ENCODE measurements at regions of chr4 and their contacts with region 1.

Region 1: DNA sequence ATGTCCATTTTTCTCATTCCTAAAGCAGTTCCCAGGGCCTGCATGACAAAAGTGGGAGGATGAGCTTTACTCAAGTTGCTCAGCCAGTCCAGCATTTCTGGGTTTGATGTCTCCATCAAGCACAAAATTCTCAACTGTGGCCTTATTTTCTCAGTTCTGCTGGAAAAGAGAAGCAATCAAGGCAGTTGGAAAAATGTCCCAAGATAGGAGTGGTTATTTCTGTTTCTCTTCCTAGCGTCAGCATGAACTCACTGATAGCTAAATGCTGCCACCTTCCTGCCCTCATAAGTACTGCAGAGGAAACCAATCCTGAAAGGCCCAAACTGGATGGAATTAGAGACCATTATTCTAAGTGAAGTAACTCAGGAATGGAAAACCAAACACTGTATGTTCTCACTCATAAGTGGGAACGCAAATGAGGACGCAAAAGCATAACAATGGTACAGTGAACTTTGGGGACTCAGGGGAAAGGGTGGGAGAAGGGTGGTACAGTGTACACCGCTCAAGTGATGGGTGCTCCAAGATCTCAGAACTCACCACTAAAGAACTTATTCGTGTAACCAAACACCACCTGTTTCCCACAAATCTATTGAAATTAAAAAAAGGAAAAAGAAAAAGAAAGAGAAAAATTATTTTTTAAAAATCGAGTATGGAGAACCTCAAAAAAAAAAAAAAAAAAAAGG is 29.6 kb downstream of the ADH7 start:
- DNase-seq: peak; percentile 71
- H3K4me3 Mint-ChIP-seq: no peak overlapping the region
- H3K27ac Mint-ChIP-seq: peak overlapping the region; percentile 94
- H3K4me1 Mint-ChIP-seq: peaks cover 31% of the 10 kb centered on the region
- H3K27me3 Mint-ChIP-seq: no peaks in the 10 kb centered on the region
- CTCF ChIP-seq: peak; percentile 67

Region 2: GRCh38 chr4:99117876-99118693 is 287.5 kb before region 1 on chr4:
- CTCF ChIA-PET with region 1: no interaction called
- intact Hi-C with region 1: loop called (anchors 1 kb)
- DNase-seq: no peak
- H3K4me3 Mint-ChIP-seq: no peak overlapping the region
- H3K27ac Mint-ChIP-seq: no peak overlapping the region
- H3K4me1 Mint-ChIP-seq: no peaks in the 10 kb centered on the region
- H3K27me3 Mint-ChIP-seq: no peaks in the 10 kb centered on the region
- CTCF ChIP-seq: no peak

Region 3: GRCh38 chr4:99159699-99160098 is 245.9 kb before region 1 on chr4:
- CTCF ChIA-PET with region 1: no interaction called
- intact Hi-C with region 1: loop called (anchors 1 kb)
- DNase-seq: no peak
- H3K4me3 Mint-ChIP-seq: no peak overlapping the region
- H3K27ac Mint-ChIP-seq: no peak overlapping the region
- H3K4me1 Mint-ChIP-seq: peaks cover 18% of the 10 kb centered on the region
- H3K27me3 Mint-ChIP-seq: no peaks in the 10 kb centered on the region
- CTCF ChIP-seq: no peak

Region 4: GRCh38 chr4:99201690-99202089 is 203.9 kb before region 1 on chr4:
- CTCF ChIA-PET with region 1: interaction called, 11 read pairs
- intact Hi-C with region 1: loop called (anchors 1 kb)
- DNase-seq: no peak
- H3K4me3 Mint-ChIP-seq: no peak overlapping the region
- H3K27ac Mint-ChIP-seq: no peak overlapping the region
- H3K4me1 Mint-ChIP-seq: peaks cover 21% of the 10 kb centered on the region
- H3K27me3 Mint-ChIP-seq: no peaks in the 10 kb centered on the region
- CTCF ChIP-seq: no peak

Region 5: DNA sequence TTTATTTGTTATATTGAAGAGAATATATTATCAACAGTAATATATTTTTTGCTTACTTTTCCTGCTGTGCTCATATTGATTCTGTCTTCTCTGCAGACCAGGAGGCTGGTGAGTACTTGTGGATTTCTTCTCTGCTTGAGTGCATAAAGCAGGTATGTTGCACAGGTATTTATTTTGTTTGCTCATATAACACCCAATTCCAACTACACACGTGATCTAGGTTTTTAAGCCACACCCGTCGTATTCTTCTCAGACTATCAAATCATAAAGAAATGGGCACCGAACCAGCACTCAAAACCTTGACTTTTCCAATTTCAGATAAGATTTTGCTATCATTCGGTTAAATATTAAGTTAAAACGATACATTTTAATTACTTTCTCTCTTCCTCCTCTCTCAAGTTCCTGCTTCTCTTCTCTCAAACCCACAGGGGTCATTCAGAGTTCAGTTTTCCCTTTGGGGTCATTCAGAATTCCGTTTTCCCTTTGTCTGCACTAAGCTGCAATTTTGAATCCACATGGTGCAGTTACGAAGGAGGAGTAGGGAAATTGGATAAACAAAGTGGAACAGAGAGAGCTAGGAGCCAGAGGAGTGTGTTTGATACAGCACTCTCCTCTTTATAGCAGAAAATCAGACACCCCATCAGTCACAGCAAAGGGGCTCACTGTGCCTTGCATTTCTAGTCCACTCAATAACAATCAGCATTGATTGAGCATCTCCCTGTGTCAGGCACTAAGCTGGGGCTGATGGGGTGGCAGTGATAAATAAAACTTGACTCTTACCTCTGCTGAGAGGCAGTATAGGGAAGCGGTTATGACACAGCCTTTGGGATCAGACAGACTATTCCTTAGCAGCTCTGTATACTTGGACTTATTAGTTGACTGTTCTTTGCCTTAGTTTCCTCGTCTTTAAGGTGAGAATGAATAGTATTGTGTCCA is 52.7 kb before region 1 on chr4 and contains the start of gene ADH1C:
- CTCF ChIA-PET with region 1: no interaction called
- intact Hi-C with region 1: loop called (anchors 2 kb)
- DNase-seq: peak; percentile 6
- H3K4me3 Mint-ChIP-seq: peak within 1 kb of the TSS; percentile 61
- H3K27ac Mint-ChIP-seq: peak within 1 kb of the TSS; percentile 82
- H3K4me1 Mint-ChIP-seq: peaks cover 17% of the 10 kb centered on the region
- H3K27me3 Mint-ChIP-seq: no peaks in the 10 kb centered on the region
- CTCF ChIP-seq: no peak
- total RNA-seq, gene ADH1C: 5.8 and 7.9 TPM in 2 replicates

Region 6: GRCh38 chr4:99462875-99463464 is 57.4 kb after region 1 on chr4:
- CTCF ChIA-PET with region 1: interaction called, 15 read pairs
- intact Hi-C with region 1: loop called (anchors 1 kb)
- DNase-seq: peak; percentile 64
- H3K4me3 Mint-ChIP-seq: no peak overlapping the region
- H3K27ac Mint-ChIP-seq: no peak overlapping the region
- H3K4me1 Mint-ChIP-seq: peaks cover 15% of the 10 kb centered on the region
- H3K27me3 Mint-ChIP-seq: no peaks in the 10 kb centered on the region
- CTCF ChIP-seq: peak; percentile 37

Measured in Calu3 (cell line).